Ascending aorta (tissue), 2 donors: ENCODE measurements at regions of chr12 and their contacts with region 1.

Region 1: DNA sequence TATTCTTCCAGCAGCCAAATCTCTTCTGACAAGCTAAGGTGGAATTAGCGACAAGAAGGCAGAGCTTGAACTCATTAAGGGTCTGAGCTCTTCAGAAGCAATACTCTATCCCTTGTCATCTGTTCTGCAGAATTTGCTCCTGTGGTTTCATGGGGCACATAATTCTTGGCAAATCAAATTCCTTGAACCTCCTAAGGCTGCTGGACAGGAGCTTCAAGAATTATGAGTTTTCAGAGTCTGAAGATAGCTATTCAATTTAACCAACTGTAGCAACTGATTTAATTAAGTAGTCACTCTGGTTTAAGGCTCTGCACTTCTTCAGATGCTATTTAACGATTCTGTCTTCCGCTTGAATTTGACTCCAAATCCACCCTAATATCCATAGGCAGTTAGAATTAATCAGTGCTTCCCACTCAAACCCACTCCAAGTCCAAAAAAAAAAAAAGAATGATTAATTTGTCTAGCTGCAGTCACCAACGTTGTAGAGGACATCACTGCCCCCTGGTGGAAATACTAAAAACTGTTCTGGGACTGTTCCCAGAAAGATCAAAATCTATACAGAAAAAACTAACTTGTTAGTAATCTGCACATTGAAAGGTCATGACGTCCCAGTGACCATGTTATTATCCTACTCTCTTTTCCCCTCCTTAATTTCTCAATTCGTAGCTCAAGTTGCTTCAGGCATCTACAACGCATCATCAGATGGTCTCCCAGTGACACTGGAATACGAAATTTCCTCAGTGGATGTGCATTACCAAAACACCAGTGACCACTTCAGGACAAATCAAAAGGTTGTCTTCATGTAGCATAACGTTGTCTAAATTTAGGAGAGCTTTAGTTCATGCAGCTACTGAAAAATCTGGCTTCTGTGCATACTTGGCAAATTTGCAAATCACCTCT is 169.8 kb downstream of the KIF21A start:
- DNase-seq: no peak
- H3K4me3 ChIP-seq: no peak overlapping the region
- H3K27ac ChIP-seq: no peak overlapping the region
- H3K4me1 ChIP-seq: no peaks in the 10 kb centered on the region
- H3K27me3 ChIP-seq: no peaks in the 10 kb centered on the region
- CTCF ChIP-seq: peak in 2 of 3 experiments; percentile 45 to 58

Region 2: DNA sequence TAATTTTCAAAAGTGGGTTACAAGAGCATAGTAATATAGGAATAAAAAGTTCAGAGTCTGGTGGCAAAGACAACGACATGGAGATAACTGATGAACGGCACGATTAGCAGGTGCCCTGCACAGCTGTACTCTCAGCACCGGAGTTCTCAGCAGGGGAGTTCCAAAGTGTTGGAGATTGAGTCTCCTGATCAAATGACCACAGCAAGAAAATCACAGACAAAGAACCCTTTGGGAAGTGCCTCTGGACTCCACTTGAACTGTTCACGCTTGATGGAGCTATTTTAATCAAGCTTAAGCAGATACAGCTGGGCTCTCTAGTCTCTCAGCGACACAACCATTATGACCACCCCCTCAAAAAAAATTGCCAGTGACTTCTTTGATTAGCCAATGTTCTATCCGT is 803.4 kb before region 1 on chr12:
- intact Hi-C with region 1: no loop called
- DNase-seq: no peak
- H3K4me3 ChIP-seq: no peak overlapping the region
- H3K27ac ChIP-seq: no peak overlapping the region
- H3K4me1 ChIP-seq: no peaks in the 10 kb centered on the region
- H3K27me3 ChIP-seq: no peaks in the 10 kb centered on the region
- CTCF ChIP-seq: no peak

Region 3: DNA sequence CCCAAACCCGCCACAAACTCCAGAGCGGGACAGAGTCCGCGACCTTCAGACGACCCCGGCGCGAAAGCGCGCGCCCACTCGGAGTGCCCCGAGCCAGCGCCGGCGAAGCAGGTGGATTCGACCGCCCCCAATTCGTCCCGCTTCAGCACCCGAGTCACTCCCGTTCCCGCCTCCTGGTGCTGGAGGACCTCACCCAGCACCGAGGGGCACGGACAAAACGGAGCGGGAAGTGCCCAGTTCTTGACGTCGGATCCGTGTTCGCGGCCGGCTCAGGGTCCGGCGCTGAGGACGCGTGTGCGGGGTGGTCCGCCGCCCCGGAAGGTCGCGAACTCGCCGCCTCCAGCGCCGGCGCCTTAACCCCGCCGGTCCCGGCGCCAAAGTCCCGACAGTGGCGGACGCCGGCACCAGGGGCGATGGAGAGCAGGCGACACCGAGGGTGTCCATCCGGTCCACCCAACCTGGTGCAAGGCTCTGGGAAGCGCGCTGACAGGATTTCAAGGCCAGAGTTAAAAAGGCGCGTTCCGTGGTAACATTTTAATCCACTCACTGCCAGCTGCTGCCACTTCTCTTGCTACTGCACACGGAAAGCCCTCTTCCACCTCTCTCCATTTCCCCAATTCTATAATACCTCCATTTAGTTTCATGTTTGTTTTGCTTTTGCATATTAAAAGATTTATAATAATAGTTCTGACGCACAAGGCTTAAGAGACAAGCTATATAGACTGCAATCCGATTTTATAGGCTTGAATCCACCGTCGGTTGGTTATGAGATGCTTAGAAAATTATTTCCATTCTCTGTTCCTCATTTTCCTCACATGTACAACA is 127.7 kb before region 1 on chr12:
- intact Hi-C with region 1: loop called (anchors 2 kb)
- DNase-seq: no peak
- H3K4me3 ChIP-seq: peak overlapping the region; percentile 50 to 62
- H3K27ac ChIP-seq: no peak overlapping the region
- H3K4me1 ChIP-seq: peaks cover 0 to 7% of the 10 kb centered on the region in 2 donors
- H3K27me3 ChIP-seq: no peaks in the 10 kb centered on the region
- CTCF ChIP-seq: peak; percentile 13 to 56 (median 49)